Psoas muscle (tissue), 8 donors: ENCODE measurements at regions of chr20 and their contacts with region 1.

Region 1: DNA sequence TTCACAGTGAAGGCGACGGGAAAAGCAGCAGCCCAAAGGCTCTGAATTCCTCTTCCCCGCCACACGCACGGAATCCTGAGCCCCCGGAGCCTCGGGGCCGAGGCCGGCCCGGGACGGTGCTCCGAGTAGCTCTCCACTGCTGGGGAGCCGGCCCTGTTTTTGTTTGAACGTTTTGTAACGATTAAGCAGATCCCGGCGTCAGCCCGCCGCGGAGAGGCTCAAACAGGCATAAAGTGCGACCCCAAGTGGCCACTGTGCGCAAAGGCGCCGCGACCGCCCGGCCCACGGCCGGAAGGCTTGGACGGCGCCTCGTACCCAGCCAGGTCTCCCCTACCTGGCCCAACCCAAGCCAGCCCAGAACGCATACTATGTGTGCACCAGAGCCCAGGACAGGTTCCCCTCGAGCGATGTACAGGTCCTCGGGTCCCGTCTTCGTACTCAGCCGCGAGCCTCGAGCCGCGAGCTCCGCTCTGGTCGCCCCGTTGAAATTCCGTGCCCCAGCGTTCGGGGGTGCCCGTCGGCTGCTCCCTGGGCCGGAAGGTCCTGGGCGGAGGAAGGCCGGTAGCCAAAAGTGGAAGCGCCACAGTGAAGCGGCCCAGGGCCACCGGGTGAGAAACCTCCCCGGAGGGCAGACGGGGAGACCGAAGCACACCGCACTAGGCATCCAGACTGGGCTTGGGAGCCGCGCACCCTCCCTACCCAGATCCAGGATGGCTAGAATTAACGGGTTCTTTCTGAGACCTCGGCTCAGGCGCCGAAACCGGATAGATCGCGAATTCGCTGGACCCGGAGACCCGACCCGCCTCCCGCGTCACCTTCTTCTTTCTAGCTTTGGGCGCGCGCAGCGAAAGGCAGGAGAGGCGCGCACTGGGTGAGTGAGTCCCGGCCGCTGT is 1.2 kb upstream of the MAFB start:
- DNase-seq: peak; percentile 89 to 95
- ATAC-seq: peak; percentile 60 to 72 (median 63)
- H3K4me3 ChIP-seq: peak overlapping the region; percentile 76
- H3K27ac ChIP-seq: peak overlapping the region; percentile 93
- H3K4me1 ChIP-seq: peaks cover 19% of the 10 kb centered on the region
- H3K27me3 ChIP-seq: peaks cover 0 to 25% (median 10%) of the 10 kb centered on the region in 3 donors
- CTCF ChIP-seq: peak; percentile 96

Region 2: GRCh38 chr20:39264506-39265172 is 1425.5 kb before region 1 on chr20:
- intact Hi-C with region 1: loop called in 1 of 2 experiments (anchors 5 kb)
- DNase-seq: peak; percentile 65 to 74
- ATAC-seq: peak; percentile 72 to 90 (median 88)
- H3K4me3 ChIP-seq: no peak overlapping the region
- H3K27ac ChIP-seq: no peak overlapping the region
- H3K4me1 ChIP-seq: no peaks in the 10 kb centered on the region
- H3K27me3 ChIP-seq: no peaks in the 10 kb centered on the region
- CTCF ChIP-seq: peak; percentile 79

Region 3: GRCh38 chr20:39885975-39886649 is 804.1 kb before region 1 on chr20:
- intact Hi-C with region 1: loop called (anchors 2 to 5 kb)
- DNase-seq: peak; percentile 68 to 80
- ATAC-seq: peak; percentile 79 to 92 (median 88)
- H3K4me3 ChIP-seq: no peak overlapping the region
- H3K27ac ChIP-seq: no peak overlapping the region
- H3K4me1 ChIP-seq: no peaks in the 10 kb centered on the region
- H3K27me3 ChIP-seq: no peaks in the 10 kb centered on the region
- CTCF ChIP-seq: peak; percentile 71

Region 4: DNA sequence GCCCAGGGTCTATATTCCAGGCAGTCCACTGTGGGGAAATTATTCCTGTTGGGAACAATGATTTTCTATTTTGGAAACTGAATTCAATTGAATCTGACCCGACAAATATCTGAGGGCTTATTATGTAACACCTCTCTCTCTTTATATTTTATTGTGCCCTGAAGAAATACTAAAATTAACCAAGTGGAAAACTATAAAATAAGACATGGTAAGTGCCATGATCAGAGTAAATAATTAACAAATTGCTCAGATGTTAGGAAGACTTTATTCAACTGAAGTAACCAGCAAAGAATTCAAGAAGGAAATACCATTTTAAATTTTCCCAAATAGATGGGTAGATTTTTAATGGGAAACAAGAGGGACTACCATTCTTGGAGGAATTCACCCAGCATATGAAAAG is 634.0 kb before region 1 on chr20:
- intact Hi-C with region 1: no loop called
- DNase-seq: no peak
- ATAC-seq: no peak
- H3K4me3 ChIP-seq: no peak overlapping the region
- H3K27ac ChIP-seq: no peak overlapping the region
- H3K4me1 ChIP-seq: no peaks in the 10 kb centered on the region
- H3K27me3 ChIP-seq: no peaks in the 10 kb centered on the region
- CTCF ChIP-seq: no peak

Region 5: DNA sequence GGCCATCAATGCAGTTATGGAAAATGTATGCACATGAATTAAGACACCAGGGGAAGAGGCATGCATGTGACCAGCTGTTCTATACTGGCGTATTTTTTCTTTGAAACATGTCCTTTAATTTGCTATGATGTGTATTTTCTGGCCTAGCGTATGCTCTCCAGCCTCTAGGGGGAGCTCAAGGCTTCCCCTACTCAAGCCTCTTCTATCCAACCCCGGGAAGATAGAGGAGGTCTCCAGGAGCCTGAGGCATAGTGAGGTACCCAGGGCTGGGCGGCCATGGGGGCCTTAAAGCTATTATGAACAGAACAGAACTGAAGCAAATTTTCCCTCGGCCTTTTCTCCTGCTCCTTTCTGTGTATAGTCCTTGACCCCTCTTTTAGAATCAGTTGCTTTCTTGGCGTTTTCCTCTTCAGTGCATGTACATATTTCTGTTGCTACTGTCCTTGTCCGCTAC is 530.1 kb before region 1 on chr20:
- intact Hi-C with region 1: loop called in 1 of 2 experiments (anchors 10 kb)
- DNase-seq: peak; percentile 15 to 39
- ATAC-seq: peak in 3 of 4 donors; percentile 64 to 75 (median 65)
- H3K4me3 ChIP-seq: no peak overlapping the region
- H3K27ac ChIP-seq: no peak overlapping the region
- H3K4me1 ChIP-seq: no peaks in the 10 kb centered on the region
- H3K27me3 ChIP-seq: no peaks in the 10 kb centered on the region
- CTCF ChIP-seq: peak; percentile 52

Region 6: DNA sequence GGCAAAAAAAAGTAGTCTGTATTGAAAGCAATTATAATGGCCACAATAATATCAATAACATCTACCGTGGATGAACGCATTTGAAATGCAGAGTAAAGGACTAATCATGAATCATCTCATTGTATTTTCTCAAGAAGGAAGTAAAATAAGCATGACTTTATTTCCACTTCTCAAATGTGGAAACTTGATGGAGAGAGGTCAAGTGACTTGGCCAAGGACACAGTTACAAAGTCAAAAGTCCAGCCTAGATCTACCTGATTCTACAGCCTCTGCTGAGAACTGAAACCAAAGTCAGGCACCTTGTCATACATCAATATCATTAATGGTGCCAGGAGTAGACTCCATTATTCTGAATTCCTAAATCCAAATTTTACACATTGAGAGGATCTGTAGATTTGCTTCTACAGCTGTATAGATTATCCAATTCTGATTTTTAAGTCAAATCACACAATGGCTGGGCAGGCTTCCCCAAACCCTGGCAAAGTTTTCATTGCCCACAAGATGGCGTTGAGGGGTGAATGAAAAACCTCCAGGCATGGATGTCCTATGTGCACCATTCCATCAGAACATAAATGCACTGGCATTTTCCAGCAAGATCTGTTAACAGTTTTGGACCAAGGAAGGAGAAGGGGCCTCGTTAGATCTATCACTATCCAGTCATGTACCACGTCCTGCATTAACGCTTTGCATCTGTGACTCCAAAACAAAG is 424.2 kb before region 1 on chr20:
- intact Hi-C with region 1: loop called (anchors 2 to 5 kb)
- DNase-seq: no peak
- ATAC-seq: peak; percentile 55 to 87 (median 71)
- H3K4me3 ChIP-seq: no peak overlapping the region
- H3K27ac ChIP-seq: no peak overlapping the region
- H3K4me1 ChIP-seq: no peaks in the 10 kb centered on the region
- H3K27me3 ChIP-seq: no peaks in the 10 kb centered on the region
- CTCF ChIP-seq: peak; percentile 54

Region 7: GRCh38 chr20:40286975-40287531 is 403.1 kb before region 1 on chr20:
- intact Hi-C with region 1: loop called in 1 of 2 experiments (anchors 10 kb)
- DNase-seq: peak; percentile 83 to 94
- ATAC-seq: peak; percentile 92 to 96 (median 94)
- H3K4me3 ChIP-seq: no peak overlapping the region
- H3K27ac ChIP-seq: peak overlapping the region; percentile 74
- H3K4me1 ChIP-seq: peaks cover 17% of the 10 kb centered on the region
- H3K27me3 ChIP-seq: no peaks in the 10 kb centered on the region
- CTCF ChIP-seq: no peak

Region 8: DNA sequence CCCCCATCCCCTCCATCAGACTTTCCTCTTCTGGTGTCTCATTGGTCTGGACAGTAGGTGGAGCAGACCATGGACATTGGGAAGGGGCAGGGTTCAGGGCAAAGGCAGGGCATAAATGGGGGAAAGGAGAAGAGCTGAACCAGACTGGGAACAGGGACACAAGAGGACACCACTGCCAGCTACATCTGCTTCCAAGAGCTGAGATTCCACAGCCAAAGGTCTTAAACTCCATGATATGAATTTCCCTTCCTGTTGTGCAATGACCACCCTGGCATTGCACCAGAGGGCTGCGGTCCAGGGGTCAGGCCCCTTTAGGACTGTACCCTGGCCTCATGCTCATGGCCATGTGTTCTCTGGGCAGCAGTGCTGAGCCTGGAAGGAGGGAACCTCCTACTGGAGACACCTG is 139.1 kb before region 1 on chr20:
- intact Hi-C with region 1: no loop called
- DNase-seq: peak in 1 of 2 donors; percentile 72
- ATAC-seq: peak in 2 of 4 donors; percentile 37 to 64
- H3K4me3 ChIP-seq: no peak overlapping the region
- H3K27ac ChIP-seq: no peak overlapping the region
- H3K4me1 ChIP-seq: no peaks in the 10 kb centered on the region
- H3K27me3 ChIP-seq: no peaks in the 10 kb centered on the region
- CTCF ChIP-seq: no peak